ENCODE measurements at regions of chr17 and their contacts with region 1.

Region 1: GRCh38 chr17:81020767-81021497 is 14.0 kb upstream of the BAIAP2 start:
- DNase-seq: no peak
- H3K4me3 ChIP-seq: no peak overlapping the region
- CTCF ChIP-seq: no peak

Region 2: GRCh38 chr17:81064678-81065475 is 43.9 kb after region 1 on chr17:
- in situ Hi-C with region 1: loop called (anchors 5 kb)
- DNase-seq: no peak
- H3K4me3 ChIP-seq: no peak overlapping the region
- CTCF ChIP-seq: no peak

Region 3: DNA sequence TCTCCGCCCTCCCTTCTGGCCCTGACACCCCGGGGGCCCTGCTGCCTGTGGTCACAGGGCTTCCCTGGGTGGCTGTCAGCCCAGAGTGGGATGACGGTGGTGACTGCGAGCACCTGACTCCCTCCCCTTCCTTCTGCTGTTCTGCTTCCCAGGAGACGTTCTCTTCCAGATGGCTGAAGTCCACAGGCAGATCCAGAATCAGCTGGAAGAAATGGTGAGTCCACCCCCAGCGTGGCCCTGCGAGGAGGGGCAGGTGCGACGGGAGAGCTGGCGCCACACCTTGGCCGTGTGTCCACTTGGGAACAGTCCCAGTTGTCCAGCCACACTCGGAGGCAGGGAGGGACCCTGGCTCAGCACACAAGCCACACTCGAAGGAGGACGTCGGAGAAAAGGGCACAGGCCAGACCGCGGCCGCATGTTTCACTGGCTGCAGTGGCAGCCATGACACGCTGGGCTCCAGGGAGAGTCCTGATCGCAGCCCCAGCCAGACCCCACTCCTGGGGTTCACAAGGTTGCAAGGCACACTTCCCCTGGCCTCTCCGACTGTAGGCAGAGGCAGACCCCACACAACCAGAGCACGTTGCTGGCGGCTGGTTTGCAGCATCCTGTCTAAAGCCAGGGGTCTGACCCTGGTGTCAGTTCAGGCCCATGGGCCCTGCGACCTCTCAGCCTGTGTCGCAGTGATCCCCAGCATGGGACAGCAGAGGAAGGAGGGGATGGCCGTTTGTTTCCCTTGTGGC is 63.9 kb after region 1 on chr17:
- in situ Hi-C with region 1: loop called (anchors 5 kb)
- DNase-seq: no peak
- H3K4me3 ChIP-seq: no peak overlapping the region
- CTCF ChIP-seq: no peak

Region 4: DNA sequence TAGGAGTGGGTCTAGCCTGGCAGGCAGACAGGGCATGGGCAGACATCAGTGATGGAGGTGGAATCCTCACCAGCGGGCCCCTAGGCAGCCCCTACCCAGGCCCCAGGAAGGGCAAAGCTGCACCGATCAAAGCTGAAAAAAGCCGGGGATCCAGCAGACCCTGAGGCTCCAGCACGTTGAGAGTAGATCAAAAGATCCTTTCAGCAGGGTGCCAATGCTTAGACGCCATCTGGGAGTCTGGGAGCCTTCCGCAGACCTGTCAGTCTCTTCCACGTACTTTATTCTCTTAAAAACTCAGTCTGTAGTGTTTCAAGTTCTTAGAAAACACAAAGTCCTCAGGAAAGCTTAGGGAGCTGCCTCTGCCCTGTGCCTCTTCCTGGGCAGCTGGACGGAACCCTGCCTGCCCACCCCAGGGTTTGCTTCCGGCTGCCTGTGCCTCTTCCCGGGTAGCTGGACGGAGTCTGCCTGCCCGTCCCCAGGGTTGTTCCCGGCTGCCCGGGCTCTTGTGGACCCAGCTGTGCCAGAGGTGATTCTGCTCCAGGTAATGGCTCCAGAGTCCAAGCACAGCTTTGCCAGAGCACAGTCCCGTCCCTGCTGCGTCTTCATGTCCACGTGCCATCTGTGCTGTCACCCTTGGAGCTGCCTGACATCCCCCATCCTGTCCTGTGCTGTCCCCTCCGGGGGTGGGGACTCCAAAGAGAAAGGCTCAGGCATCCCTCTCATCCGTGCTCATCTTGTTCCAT is 93.6 kb after region 1 on chr17:
- in situ Hi-C with region 1: loop called (anchors 5 kb)
- DNase-seq: no peak
- H3K4me3 ChIP-seq: no peak overlapping the region
- CTCF ChIP-seq: no peak

Measured in astrocyte of the cerebellum (primary cell).